B cell (primary cell): ENCODE measurements at regions of chr16 and their contacts with region 1.

Region 1: DNA sequence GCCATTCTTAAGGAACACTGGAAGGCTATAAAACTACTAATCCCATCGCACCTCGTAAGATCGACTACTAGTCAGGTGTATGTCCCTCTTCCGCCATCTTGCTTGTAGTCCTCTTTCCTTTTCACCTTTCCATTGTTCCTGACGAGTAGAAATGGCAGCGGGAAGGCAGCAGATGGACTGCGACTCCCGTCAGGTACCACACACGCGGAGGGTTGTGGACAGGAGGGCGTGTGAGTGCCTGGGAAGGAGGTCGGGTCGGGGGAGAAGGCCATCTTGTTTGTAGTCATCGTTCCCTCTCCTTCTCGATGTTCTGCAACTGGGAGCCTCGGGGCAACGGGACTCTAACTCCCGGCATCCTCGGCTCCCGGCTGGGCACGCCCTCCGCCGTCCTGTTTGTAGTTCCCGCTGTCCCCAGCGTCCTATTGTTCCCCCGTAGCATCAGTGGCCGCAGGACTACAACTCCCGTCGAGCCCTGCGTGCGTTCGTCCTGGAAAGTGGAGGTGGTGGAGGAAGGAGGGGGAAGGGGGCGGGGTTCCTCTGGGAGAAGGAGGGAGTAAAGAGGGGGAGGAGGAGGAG is 324 bp upstream of the FBXL19 start:
- DNase-seq: peak; percentile 98
- ATAC-seq: peak; percentile 69
- H3K4me3 ChIP-seq: peak overlapping the region; percentile 80 to 100 (median 98)
- H3K4me3 Mint-ChIP-seq: peak overlapping the region; percentile 100
- H3K27ac ChIP-seq: peak overlapping the region; percentile 97 to 99
- H3K27ac Mint-ChIP-seq: peak overlapping the region; percentile 100
- H3K4me1 ChIP-seq: peaks cover 0 to 21% of the 10 kb centered on the region in 2 donors
- H3K4me1 Mint-ChIP-seq: peaks cover 19% of the 10 kb centered on the region
- H3K27me3 ChIP-seq: no peaks in the 10 kb centered on the region
- H3K27me3 Mint-ChIP-seq: no peaks in the 10 kb centered on the region
- CTCF ChIP-seq: no peak

Region 2: DNA sequence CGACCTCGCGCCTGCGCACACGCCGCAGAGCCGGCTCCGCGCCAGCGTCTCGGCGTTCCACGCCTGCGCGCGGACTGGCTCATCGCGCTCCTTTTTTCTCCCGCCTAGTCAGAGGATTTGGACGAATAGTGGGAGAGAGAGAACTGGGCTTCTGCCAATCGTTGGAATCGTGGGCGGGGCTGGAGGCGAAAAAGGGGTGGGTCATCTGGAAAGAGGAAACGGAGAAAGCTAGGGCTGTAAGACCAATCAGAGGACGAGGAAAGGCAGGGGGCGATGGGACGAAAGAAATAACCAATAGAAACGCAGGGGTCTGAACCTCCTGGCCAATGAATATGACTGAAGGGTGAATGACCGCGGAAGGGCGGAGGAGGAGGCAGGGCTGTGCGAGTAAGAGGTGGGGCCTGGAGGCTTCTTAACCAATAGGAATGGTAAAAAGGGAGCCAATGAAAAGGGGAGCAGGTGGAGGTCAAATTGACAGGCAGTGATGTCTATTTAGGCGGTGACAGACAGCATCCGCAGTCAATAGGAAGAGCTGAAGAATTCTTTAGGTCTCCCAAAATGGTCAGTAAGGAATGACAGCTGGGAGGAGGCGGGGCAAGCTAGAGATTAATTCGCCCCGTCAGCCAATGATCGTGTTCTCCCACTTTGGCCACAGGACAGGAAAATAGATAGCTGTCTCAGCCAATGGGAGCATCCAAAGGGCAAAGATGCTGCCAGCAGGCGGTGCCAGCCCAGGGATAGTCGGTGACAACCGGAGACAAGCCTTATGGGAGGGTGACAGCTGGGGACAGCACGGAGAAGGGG is 552.4 kb before region 1 on chr16 and contains the start of gene TBC1D10B:
- CTCF ChIA-PET with region 1: no interaction called
- POLR2A ChIA-PET with region 1: no interaction called
- intact Hi-C with region 1: loop called (anchors 2 kb)
- DNase-seq: peak; percentile 99
- ATAC-seq: peak; percentile 82
- H3K4me3 ChIP-seq: peak within 1 kb of the TSS; percentile 47 to 77 (median 70)
- H3K4me3 Mint-ChIP-seq: peak within 1 kb of the TSS; percentile 86
- H3K27ac ChIP-seq: peak within 1 kb of the TSS; percentile 60 to 71
- H3K27ac Mint-ChIP-seq: peak within 1 kb of the TSS; percentile 90
- H3K4me1 ChIP-seq: peaks cover 25 to 35% of the 10 kb centered on the region in 2 donors
- H3K4me1 Mint-ChIP-seq: peaks cover 49% of the 10 kb centered on the region
- H3K27me3 ChIP-seq: no peaks in the 10 kb centered on the region
- H3K27me3 Mint-ChIP-seq: no peaks in the 10 kb centered on the region
- CTCF ChIP-seq: peak; percentile 26
- total RNA-seq, gene TBC1D10B: 53.0 and 58.0 TPM in 2 replicates

Region 3: DNA sequence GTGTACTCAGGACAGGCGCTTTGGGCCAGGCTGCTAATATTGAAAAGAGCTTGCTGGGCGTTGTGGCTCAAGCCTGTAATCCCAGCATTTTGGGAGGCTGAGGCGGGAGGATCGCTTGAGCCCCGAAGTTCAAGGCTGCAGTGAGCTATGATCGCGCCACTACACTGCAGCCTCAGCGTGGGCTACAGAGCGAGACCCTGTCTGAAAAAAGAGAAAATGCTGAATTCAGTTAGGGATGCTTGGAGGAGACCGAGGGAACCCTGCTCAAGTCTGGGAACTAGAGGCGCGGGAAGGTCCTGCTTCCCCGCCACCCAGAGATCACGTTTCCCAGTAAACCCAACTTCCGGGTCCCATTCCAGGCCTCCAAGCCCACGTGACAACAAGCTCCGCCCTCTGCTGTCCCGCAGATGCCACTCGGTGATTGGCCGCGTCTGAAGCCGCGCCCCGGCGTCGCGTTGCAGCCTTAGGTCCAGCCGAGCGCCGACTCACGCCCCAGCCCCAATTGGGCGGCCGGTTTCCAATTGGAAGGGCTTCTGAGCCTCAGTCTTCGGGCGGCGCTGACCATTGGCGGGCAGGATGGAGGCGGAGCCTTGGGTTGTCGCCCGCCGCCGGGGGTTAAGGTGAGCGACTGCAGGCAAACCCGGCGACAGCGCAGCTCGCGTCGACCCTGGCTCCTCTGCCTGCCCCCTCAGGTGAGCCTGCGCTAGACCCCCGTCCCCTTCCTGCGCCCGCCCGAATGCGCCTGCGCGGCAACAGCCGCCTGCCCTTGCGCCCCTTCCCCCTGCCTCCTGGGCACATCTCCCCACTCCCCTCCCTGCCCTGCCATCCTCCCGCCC is 175.0 kb before region 1 on chr16 and contains the start of gene PHKG2:
- CTCF ChIA-PET with region 1: no interaction called
- POLR2A ChIA-PET with region 1: interaction called, 3 read pairs
- intact Hi-C with region 1: loop called (anchors 1 kb)
- DNase-seq: peak; percentile 98
- ATAC-seq: peak; percentile 99
- H3K4me3 ChIP-seq: peak within 1 kb of the TSS; percentile 22 to 84 (median 69)
- H3K4me3 Mint-ChIP-seq: peak within 1 kb of the TSS; percentile 92
- H3K27ac ChIP-seq: peak within 1 kb of the TSS; percentile 45 to 75
- H3K27ac Mint-ChIP-seq: peak within 1 kb of the TSS; percentile 93
- H3K4me1 ChIP-seq: peaks cover 3 to 5% of the 10 kb centered on the region in 2 donors
- H3K4me1 Mint-ChIP-seq: peaks cover 19% of the 10 kb centered on the region
- H3K27me3 ChIP-seq: no peaks in the 10 kb centered on the region
- H3K27me3 Mint-ChIP-seq: no peaks in the 10 kb centered on the region
- CTCF ChIP-seq: no peak
- total RNA-seq, gene PHKG2: 54.1 and 55.7 TPM in 2 replicates

Region 4: DNA sequence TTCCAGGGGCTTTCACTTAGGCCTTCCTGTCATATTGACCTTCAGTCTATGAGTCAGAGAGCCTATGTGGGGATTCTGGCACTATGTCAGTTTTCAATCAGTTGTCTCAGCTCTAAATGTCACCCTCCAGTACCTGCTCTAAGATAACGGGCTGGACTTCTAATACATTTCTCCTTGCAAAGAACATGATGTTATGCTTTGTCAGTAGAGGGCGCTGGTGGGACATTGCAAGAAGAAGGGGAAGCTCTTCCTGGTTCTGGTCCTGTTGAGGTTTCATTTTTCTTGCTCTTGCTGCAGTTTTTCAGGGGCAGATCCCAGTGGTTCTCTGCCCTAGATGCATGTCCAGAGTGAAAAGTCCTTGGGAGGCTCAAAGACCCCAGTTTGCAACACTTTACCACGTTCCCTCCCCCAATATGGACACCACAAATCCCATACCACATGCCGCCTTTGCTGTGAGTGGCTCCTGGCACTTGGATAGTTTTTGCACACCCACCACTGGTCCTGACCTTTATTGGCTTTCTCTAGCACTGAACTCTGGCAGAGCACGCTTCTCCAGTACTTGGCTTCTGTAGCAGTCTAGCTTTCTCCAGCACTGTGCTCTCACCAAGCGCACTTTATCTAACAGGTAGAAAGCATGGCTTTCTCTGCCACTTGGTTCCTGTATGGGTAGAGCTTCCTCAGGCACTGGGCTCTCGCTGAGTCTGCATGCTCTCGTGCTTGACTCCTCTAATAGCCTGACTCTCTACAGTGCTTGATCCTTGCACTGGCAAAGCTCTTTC is 78.2 kb before region 1 on chr16:
- CTCF ChIA-PET with region 1: interaction called, 58 read pairs
- POLR2A ChIA-PET with region 1: interaction called, 3 read pairs
- intact Hi-C with region 1: no loop called
- DNase-seq: peak; percentile 89
- ATAC-seq: peak; percentile 88
- H3K4me3 ChIP-seq: peak overlapping the region in 1 of 5 experiments; percentile 11
- H3K4me3 Mint-ChIP-seq: peak overlapping the region; percentile 76
- H3K27ac ChIP-seq: no peak overlapping the region
- H3K27ac Mint-ChIP-seq: peak overlapping the region; percentile 88
- H3K4me1 ChIP-seq: peaks cover 6 to 9% of the 10 kb centered on the region in 2 donors
- H3K4me1 Mint-ChIP-seq: peaks cover 9% of the 10 kb centered on the region
- H3K27me3 ChIP-seq: no peaks in the 10 kb centered on the region
- H3K27me3 Mint-ChIP-seq: peaks cover 3% of the 10 kb centered on the region
- CTCF ChIP-seq: peak; percentile 88

Region 5: GRCh38 chr16:30902029-30902972 is 20.7 kb before region 1 on chr16:
- CTCF ChIA-PET with region 1: interaction called, 26 read pairs
- POLR2A ChIA-PET with region 1: interaction called, 5 read pairs
- intact Hi-C with region 1: loop called (anchors 1 kb)
- DNase-seq: peak; percentile 78
- ATAC-seq: peak; percentile 80
- H3K4me3 ChIP-seq: peak overlapping the region; percentile 45 to 82 (median 62)
- H3K4me3 Mint-ChIP-seq: peak overlapping the region; percentile 98
- H3K27ac ChIP-seq: peak overlapping the region; percentile 57 to 79
- H3K27ac Mint-ChIP-seq: peak overlapping the region; percentile 98
- H3K4me1 ChIP-seq: peaks cover 29 to 40% of the 10 kb centered on the region in 2 donors
- H3K4me1 Mint-ChIP-seq: peaks cover 25% of the 10 kb centered on the region
- H3K27me3 ChIP-seq: no peaks in the 10 kb centered on the region
- H3K27me3 Mint-ChIP-seq: no peaks in the 10 kb centered on the region
- CTCF ChIP-seq: no peak

Region 6: GRCh38 chr16:30957456-30958174 is 34.6 kb after region 1 on chr16 and contains the start of gene SETD1A:
- CTCF ChIA-PET with region 1: no interaction called
- POLR2A ChIA-PET with region 1: interaction called, 4 read pairs
- intact Hi-C with region 1: loop called (anchors 1 kb)
- DNase-seq: peak; percentile 99
- ATAC-seq: peak; percentile 83
- H3K4me3 ChIP-seq: peak within 1 kb of the TSS; percentile 85 to 99 (median 95)
- H3K4me3 Mint-ChIP-seq: peak within 1 kb of the TSS; percentile 97
- H3K27ac ChIP-seq: peak within 1 kb of the TSS; percentile 92 to 96
- H3K27ac Mint-ChIP-seq: peak within 1 kb of the TSS; percentile 99
- H3K4me1 ChIP-seq: peaks cover 15 to 25% of the 10 kb centered on the region in 2 donors
- H3K4me1 Mint-ChIP-seq: peaks cover 40% of the 10 kb centered on the region
- H3K27me3 ChIP-seq: no peaks in the 10 kb centered on the region
- H3K27me3 Mint-ChIP-seq: no peaks in the 10 kb centered on the region
- CTCF ChIP-seq: no peak
- total RNA-seq, gene SETD1A: 37.2 and 39.5 TPM in 2 replicates

Region 7: GRCh38 chr16:31117391-31118197 is 194.5 kb after region 1 on chr16 and contains the start of gene KAT8:
- CTCF ChIA-PET with region 1: no interaction called
- POLR2A ChIA-PET with region 1: interaction called, 10 read pairs
- intact Hi-C with region 1: no loop called
- DNase-seq: peak; percentile 98
- ATAC-seq: peak; percentile 94
- H3K4me3 ChIP-seq: peak within 1 kb of the TSS; percentile 49 to 83 (median 66)
- H3K4me3 Mint-ChIP-seq: peak within 1 kb of the TSS; percentile 92
- H3K27ac ChIP-seq: peak within 1 kb of the TSS; percentile 72 to 95
- H3K27ac Mint-ChIP-seq: peak within 1 kb of the TSS; percentile 96
- H3K4me1 ChIP-seq: peaks cover 10 to 20% of the 10 kb centered on the region in 2 donors
- H3K4me1 Mint-ChIP-seq: peaks cover 15% of the 10 kb centered on the region
- H3K27me3 ChIP-seq: no peaks in the 10 kb centered on the region
- H3K27me3 Mint-ChIP-seq: no peaks in the 10 kb centered on the region
- CTCF ChIP-seq: no peak
- total RNA-seq, gene KAT8: 100.0 and 102 TPM in 2 replicates